MCF 10A (cell line): ENCODE measurements at regions of chr9 and their contacts with region 1.

Region 1: GRCh38 chr9:447230-448025 is 232.8 kb downstream of the DOCK8 start:
- DNase-seq: peak; percentile 89
- H3K4me3 Mint-ChIP-seq: peak overlapping the region; percentile 78
- H3K27ac Mint-ChIP-seq: peak overlapping the region; percentile 93
- H3K4me1 Mint-ChIP-seq: peaks cover 37% of the 10 kb centered on the region
- H3K27me3 Mint-ChIP-seq: no peaks in the 10 kb centered on the region
- CTCF ChIP-seq: no peak

Region 2: GRCh38 chr9:419571-420402 is 27.6 kb before region 1 on chr9:
- CTCF ChIA-PET with region 1: interaction called, 3 read pairs
- POLR2A ChIA-PET with region 1: interaction called, 54 read pairs
- intact Hi-C with region 1: loop called (anchors 2 kb)
- DNase-seq: peak; percentile 46
- H3K4me3 Mint-ChIP-seq: peak overlapping the region; percentile 2
- H3K27ac Mint-ChIP-seq: peak overlapping the region; percentile 86
- H3K4me1 Mint-ChIP-seq: peaks cover 19% of the 10 kb centered on the region
- H3K27me3 Mint-ChIP-seq: no peaks in the 10 kb centered on the region
- CTCF ChIP-seq: no peak

Region 3: GRCh38 chr9:469672-470551 is 22.5 kb after region 1 on chr9:
- CTCF ChIA-PET with region 1: interaction called, 7 read pairs
- POLR2A ChIA-PET with region 1: interaction called, 76 read pairs
- intact Hi-C with region 1: no loop called
- DNase-seq: peak; percentile 91
- H3K4me3 Mint-ChIP-seq: peak overlapping the region; percentile 87
- H3K27ac Mint-ChIP-seq: peak overlapping the region; percentile 86
- H3K4me1 Mint-ChIP-seq: peaks cover 22% of the 10 kb centered on the region
- H3K27me3 Mint-ChIP-seq: no peaks in the 10 kb centered on the region
- CTCF ChIP-seq: no peak

Region 4: GRCh38 chr9:503881-504852 is 56.7 kb after region 1 on chr9:
- CTCF ChIA-PET with region 1: no interaction called
- POLR2A ChIA-PET with region 1: interaction called, 70 read pairs
- intact Hi-C with region 1: loop called (anchors 2 kb)
- DNase-seq: peak; percentile 82
- H3K4me3 Mint-ChIP-seq: peak within 1 kb of the TSS; percentile 82
- H3K27ac Mint-ChIP-seq: peak within 1 kb of the TSS; percentile 37
- H3K4me1 Mint-ChIP-seq: peaks cover 18% of the 10 kb centered on the region
- H3K27me3 Mint-ChIP-seq: no peaks in the 10 kb centered on the region
- CTCF ChIP-seq: peak; percentile 21

Region 5: GRCh38 chr9:530681-531080 is 83.3 kb after region 1 on chr9:
- CTCF ChIA-PET with region 1: no interaction called
- POLR2A ChIA-PET with region 1: interaction called, 16 read pairs
- intact Hi-C with region 1: no loop called
- DNase-seq: peak; percentile 87
- H3K4me3 Mint-ChIP-seq: peak overlapping the region; percentile 22
- H3K27ac Mint-ChIP-seq: peak overlapping the region; percentile 98
- H3K4me1 Mint-ChIP-seq: peaks cover 49% of the 10 kb centered on the region
- H3K27me3 Mint-ChIP-seq: no peaks in the 10 kb centered on the region
- CTCF ChIP-seq: no peak

Region 6: GRCh38 chr9:551986-552929 is 104.8 kb after region 1 on chr9:
- CTCF ChIA-PET with region 1: no interaction called
- POLR2A ChIA-PET with region 1: interaction called, 47 read pairs
- intact Hi-C with region 1: no loop called
- DNase-seq: peak; percentile 22
- H3K4me3 Mint-ChIP-seq: no peak overlapping the region
- H3K27ac Mint-ChIP-seq: no peak overlapping the region
- H3K4me1 Mint-ChIP-seq: peaks cover 30% of the 10 kb centered on the region
- H3K27me3 Mint-ChIP-seq: no peaks in the 10 kb centered on the region
- CTCF ChIP-seq: no peak

Region 7: DNA sequence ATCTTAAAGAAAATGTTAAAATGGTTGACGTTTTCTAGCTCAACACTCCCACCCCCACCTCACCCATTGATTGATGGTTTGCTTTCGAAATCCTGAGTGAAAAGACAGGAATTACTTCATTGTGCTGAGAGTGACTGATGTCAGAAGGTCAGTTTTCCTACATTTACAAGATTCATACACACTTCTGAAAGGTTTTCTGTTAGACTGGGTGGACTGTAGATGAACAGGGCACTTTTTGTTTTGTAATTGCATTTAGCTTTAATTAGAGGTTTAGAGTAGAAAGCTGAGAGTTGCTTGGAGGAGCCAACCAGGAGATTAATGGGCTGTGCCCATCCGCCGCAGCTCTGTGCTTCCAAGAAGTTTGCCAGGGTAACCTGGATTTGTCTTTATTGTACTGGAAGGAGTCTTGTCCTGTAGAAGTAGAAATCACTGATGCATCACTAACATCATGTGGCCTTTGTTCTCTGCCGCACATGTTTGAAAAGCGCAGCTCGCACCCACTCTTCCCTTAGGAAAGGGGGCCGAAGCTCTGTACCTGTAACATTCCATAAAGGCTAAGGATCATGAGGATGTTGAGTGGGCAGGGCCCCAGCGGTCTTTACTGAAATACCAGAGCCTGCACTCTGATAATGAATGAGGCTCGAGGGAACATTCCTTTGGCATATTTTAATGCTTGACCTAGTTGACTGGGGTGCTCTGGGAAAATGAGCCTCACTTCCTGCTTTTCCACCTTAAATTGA is 126.4 kb after region 1 on chr9:
- CTCF ChIA-PET with region 1: no interaction called
- POLR2A ChIA-PET with region 1: interaction called, 26 read pairs
- intact Hi-C with region 1: no loop called
- DNase-seq: no peak
- H3K4me3 Mint-ChIP-seq: no peak overlapping the region
- H3K27ac Mint-ChIP-seq: no peak overlapping the region
- H3K4me1 Mint-ChIP-seq: peaks cover 15% of the 10 kb centered on the region
- H3K27me3 Mint-ChIP-seq: no peaks in the 10 kb centered on the region
- CTCF ChIP-seq: no peak

Region 8: DNA sequence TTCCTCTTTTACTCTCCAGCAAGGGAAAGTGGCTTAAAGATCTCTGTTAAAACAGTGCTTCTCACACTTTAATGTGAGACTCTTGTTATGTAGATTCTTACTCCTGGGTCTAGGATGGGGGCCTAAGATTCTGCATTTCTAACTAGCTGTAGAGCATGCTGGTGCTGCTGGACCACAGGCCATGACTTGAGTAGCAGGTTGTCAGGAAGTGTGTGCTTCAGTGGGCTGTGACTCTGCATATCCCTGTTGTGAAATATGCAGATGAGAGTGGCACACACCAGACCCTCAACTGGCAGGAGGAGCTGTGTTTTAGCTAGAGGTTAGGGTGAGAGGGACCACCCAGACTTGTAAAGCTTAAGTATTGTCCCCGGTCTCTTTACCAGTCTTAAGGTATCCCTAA is 202.9 kb after region 1 on chr9:
- CTCF ChIA-PET with region 1: no interaction called
- POLR2A ChIA-PET with region 1: no interaction called
- intact Hi-C with region 1: no loop called
- DNase-seq: no peak
- H3K4me3 Mint-ChIP-seq: no peak overlapping the region
- H3K27ac Mint-ChIP-seq: no peak overlapping the region
- H3K4me1 Mint-ChIP-seq: peaks cover 40% of the 10 kb centered on the region
- H3K27me3 Mint-ChIP-seq: no peaks in the 10 kb centered on the region
- CTCF ChIP-seq: no peak